ENCODE measurements at regions of chr12 and their contacts with region 1.

Region 1: GRCh38 chr12:39587225-39587624 is 32.4 kb downstream of the ABCD2 start:
- DNase-seq: peak; percentile 60
- H3K4me3 Mint-ChIP-seq: no peak overlapping the region
- H3K27ac Mint-ChIP-seq: no peak overlapping the region
- H3K4me1 Mint-ChIP-seq: peaks cover 23% of the 10 kb centered on the region
- H3K27me3 Mint-ChIP-seq: no peaks in the 10 kb centered on the region
- CTCF ChIP-seq: peak; percentile 43

Region 2: GRCh38 chr12:39319187-39319586 is 268.0 kb before region 1 on chr12:
- CTCF ChIA-PET with region 1: interaction called, 3 read pairs
- POLR2A ChIA-PET with region 1: no interaction called
- intact Hi-C with region 1: loop called (anchors 10 kb)
- DNase-seq: no peak
- H3K4me3 Mint-ChIP-seq: no peak overlapping the region
- H3K27ac Mint-ChIP-seq: no peak overlapping the region
- H3K4me1 Mint-ChIP-seq: no peaks in the 10 kb centered on the region
- H3K27me3 Mint-ChIP-seq: no peaks in the 10 kb centered on the region
- CTCF ChIP-seq: no peak

Region 3: DNA sequence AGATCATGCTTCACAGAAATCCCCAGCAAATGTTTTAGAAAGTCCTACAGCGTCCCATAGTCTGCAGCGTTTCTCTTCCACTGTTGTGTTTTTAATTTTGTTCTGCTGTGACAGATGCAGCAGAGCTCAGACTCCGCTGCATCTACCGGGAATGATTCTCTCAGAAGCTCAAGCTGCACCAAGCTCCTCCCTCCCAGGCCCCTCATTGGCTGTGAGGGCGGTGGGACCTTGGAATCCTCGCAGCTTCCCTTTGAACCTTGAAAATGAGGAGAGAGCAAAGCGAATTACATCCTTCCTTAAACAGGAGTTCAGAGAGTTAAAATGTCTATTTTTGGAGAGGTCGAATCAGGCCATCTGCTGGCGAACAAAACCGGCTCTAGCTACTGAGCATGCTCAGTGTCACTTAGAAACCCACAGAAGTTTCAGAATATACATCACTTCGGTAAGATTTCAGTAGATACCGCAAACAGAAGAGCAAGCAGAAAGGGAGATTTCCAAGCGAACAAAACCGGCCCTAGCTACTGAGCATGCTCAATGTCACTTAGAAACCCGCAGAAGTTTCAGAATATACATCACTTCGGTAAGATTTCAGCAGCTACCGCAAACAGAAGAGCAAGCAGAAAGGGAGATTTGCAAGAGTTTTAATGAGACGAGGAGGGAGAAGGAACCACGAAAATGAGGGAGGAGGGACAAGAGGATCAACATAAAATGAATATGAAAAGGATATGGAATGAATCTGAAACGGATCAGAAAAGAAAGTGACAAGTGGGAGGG is 32.6 kb after region 1 on chr12 and contains the start of gene ABCD2:
- CTCF ChIA-PET with region 1: interaction called, 11 read pairs
- POLR2A ChIA-PET with region 1: interaction called, 3 read pairs
- intact Hi-C with region 1: no loop called
- DNase-seq: peak; percentile 66
- H3K4me3 Mint-ChIP-seq: no peak within 1 kb of the TSS
- H3K27ac Mint-ChIP-seq: no peak within 1 kb of the TSS
- H3K4me1 Mint-ChIP-seq: no peaks in the 10 kb centered on the region
- H3K27me3 Mint-ChIP-seq: no peaks in the 10 kb centered on the region
- CTCF ChIP-seq: peak; percentile 31
- total RNA-seq, gene ABCD2: 0.20 and 0.42 TPM in 2 replicates

Region 4: GRCh38 chr12:39692258-39692853 is 105.1 kb after region 1 on chr12:
- CTCF ChIA-PET with region 1: interaction called, 3 read pairs
- POLR2A ChIA-PET with region 1: no interaction called
- intact Hi-C with region 1: loop called (anchors 1 kb)
- DNase-seq: peak; percentile 3
- H3K4me3 Mint-ChIP-seq: no peak overlapping the region
- H3K27ac Mint-ChIP-seq: no peak overlapping the region
- H3K4me1 Mint-ChIP-seq: no peaks in the 10 kb centered on the region
- H3K27me3 Mint-ChIP-seq: no peaks in the 10 kb centered on the region
- CTCF ChIP-seq: no peak

Region 5: GRCh38 chr12:39764944-39765560 is 177.8 kb after region 1 on chr12:
- CTCF ChIA-PET with region 1: no interaction called
- POLR2A ChIA-PET with region 1: no interaction called
- intact Hi-C with region 1: loop called (anchors 10 kb)
- DNase-seq: peak; percentile 47
- H3K4me3 Mint-ChIP-seq: no peak overlapping the region
- H3K27ac Mint-ChIP-seq: no peak overlapping the region
- H3K4me1 Mint-ChIP-seq: no peaks in the 10 kb centered on the region
- H3K27me3 Mint-ChIP-seq: no peaks in the 10 kb centered on the region
- CTCF ChIP-seq: peak; percentile 85

Region 6: GRCh38 chr12:39990122-39991101 is 403.2 kb after region 1 on chr12:
- CTCF ChIA-PET with region 1: interaction called, 4 read pairs
- POLR2A ChIA-PET with region 1: no interaction called
- intact Hi-C with region 1: loop called (anchors 5 kb)
- DNase-seq: peak; percentile 66
- H3K4me3 Mint-ChIP-seq: no peak overlapping the region
- H3K27ac Mint-ChIP-seq: no peak overlapping the region
- H3K4me1 Mint-ChIP-seq: no peaks in the 10 kb centered on the region
- H3K27me3 Mint-ChIP-seq: no peaks in the 10 kb centered on the region
- CTCF ChIP-seq: peak; percentile 71